Activated CD4-positive, alpha-beta memory T cell treated with anti-CD3 and anti-CD28 coated beads for 36 hours (primary cell): ENCODE measurements at regions of chr4 and their contacts with region 1.

Region 1: DNA sequence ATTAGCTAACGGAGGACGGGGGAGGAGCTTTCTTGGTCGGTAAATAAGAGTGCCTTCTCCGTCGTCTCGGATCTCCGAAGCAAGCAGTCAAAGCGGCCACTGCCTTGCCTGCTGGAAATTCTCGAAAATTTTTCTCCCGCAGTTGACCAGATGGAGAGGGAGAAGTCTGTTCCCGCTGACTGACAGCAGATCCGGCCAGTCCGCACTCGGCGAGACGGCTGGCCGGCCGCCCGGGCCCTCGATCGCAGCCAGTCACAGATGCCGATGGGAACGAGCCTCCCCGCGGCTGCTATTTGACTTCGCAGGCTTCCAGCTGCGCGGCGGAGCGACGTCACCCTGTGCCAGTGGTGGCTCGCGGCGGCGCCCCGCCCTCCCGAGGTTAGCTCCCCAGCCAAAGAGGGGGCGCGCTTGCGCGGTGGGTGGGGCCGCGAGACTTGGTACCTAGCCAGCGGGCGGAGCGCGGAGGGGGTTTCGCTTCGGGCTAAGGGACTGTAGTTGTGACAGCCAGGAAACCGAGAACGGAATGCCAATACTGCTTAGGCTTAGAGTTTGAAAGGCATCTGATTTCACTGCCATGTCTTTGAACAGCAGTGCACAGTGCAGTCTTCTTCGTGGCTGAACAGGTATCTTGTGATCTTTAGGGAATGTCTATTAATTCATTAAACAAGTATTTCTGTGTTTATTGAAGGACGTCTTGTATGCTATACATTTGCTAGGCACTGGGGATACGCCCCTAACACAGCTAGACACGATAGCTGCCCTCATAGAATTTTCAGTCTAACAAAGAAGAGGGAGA is at the start of gene PPM1K:
- DNase-seq: peak; percentile 100
- H3K4me3 Mint-ChIP-seq: peak within 1 kb of the TSS; percentile 99
- H3K27ac Mint-ChIP-seq: peak within 1 kb of the TSS; percentile 99
- H3K4me1 Mint-ChIP-seq: peaks cover 36% of the 10 kb centered on the region
- H3K27me3 Mint-ChIP-seq: no peaks in the 10 kb centered on the region
- total RNA-seq, gene PPM1K: 63.7 to 65.5 TPM

Region 2: GRCh38 chr4:88007304-88008121 is 277.1 kb before region 1 on chr4 and contains the start of gene PKD2:
- CTCF ChIA-PET with region 1: no interaction called
- POLR2A ChIA-PET with region 1: no interaction called
- intact Hi-C with region 1: loop called (anchors 5 kb)
- DNase-seq: peak; percentile 84
- H3K4me3 Mint-ChIP-seq: peak within 1 kb of the TSS; percentile 88
- H3K27ac Mint-ChIP-seq: no peak within 1 kb of the TSS
- H3K4me1 Mint-ChIP-seq: peaks cover 19% of the 10 kb centered on the region
- H3K27me3 Mint-ChIP-seq: peaks cover 11% of the 10 kb centered on the region
- total RNA-seq, gene PKD2: 4.0 to 4.2 TPM

Region 3: GRCh38 chr4:88217920-88218319 is 66.7 kb before region 1 on chr4:
- CTCF ChIA-PET with region 1: interaction called, 7 read pairs
- POLR2A ChIA-PET with region 1: no interaction called
- intact Hi-C with region 1: loop called (anchors 2 kb)
- DNase-seq: no peak
- H3K4me3 Mint-ChIP-seq: no peak overlapping the region
- H3K27ac Mint-ChIP-seq: no peak overlapping the region
- H3K4me1 Mint-ChIP-seq: peaks cover 2% of the 10 kb centered on the region
- H3K27me3 Mint-ChIP-seq: peaks cover 3% of the 10 kb centered on the region

Region 4: GRCh38 chr4:88320780-88321373 is 36.2 kb after region 1 on chr4:
- CTCF ChIA-PET with region 1: no interaction called
- POLR2A ChIA-PET with region 1: interaction called, 18 read pairs
- intact Hi-C with region 1: loop called (anchors 1 kb)
- DNase-seq: peak; percentile 41
- H3K4me3 Mint-ChIP-seq: peak overlapping the region; percentile 60
- H3K27ac Mint-ChIP-seq: peak overlapping the region; percentile 77
- H3K4me1 Mint-ChIP-seq: peaks cover 20% of the 10 kb centered on the region
- H3K27me3 Mint-ChIP-seq: no peaks in the 10 kb centered on the region

Region 5: DNA sequence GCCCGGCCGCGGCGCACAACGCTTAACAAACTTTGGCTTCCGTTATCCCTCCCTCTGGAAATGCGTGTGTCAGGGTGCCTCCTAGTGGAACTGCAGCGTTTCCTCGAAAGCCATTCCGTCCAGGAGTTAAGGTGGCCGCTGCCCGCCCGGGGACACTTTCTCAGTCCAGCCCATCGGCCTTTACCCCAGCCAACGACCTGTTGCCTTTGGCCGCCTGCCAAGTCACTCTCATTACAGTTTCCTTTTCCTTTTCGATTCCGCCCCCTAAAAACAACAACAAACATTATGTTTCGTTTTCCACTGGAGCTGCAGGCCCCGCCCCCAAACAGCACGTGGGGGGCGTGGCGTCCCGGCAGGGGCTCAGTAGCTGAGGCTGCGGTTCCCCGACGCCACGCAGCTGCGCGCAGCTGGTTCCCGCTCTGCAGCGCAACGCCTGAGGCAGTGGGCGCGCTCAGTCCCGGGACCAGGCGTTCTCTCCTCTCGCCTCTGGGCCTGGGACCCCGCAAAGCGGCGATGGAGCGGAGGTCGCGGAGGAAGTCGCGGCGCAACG is 172.2 kb after region 1 on chr4 and contains the start of gene HERC5:
- CTCF ChIA-PET with region 1: interaction called, 8 read pairs
- POLR2A ChIA-PET with region 1: interaction called, 33 read pairs
- intact Hi-C with region 1: loop called (anchors 1 kb)
- DNase-seq: peak; percentile 94
- H3K4me3 Mint-ChIP-seq: peak within 1 kb of the TSS; percentile 100
- H3K27ac Mint-ChIP-seq: peak within 1 kb of the TSS; percentile 97
- H3K4me1 Mint-ChIP-seq: peaks cover 12% of the 10 kb centered on the region
- H3K27me3 Mint-ChIP-seq: peaks cover 3% of the 10 kb centered on the region
- total RNA-seq, gene HERC5: 32.3 to 34.0 TPM

Region 6: DNA sequence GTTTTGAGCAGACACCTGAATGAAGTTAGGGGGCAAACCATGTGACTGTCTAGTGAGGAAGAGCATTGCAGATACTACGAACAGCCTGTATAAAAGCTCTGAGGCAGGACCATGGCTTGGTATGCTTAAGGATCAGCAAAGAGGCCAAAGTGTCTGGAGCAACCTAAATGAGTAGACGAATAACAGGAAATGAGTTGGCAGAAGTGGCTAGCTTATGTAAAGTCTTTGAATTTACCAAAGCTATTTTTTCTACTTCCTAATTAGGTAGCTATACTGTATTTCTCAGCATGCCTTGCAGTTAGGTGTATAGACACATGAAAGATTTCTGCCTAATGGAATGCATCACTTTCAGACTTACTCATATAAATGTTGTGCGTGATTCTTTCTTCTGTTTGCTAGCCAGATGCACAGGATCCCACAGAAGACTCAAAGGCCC is 1032.3 kb after region 1 on chr4:
- CTCF ChIA-PET with region 1: no interaction called
- POLR2A ChIA-PET with region 1: no interaction called
- intact Hi-C with region 1: no loop called
- DNase-seq: peak; percentile 41
- H3K4me3 Mint-ChIP-seq: peak overlapping the region; percentile 33
- H3K27ac Mint-ChIP-seq: peak overlapping the region; percentile 84
- H3K4me1 Mint-ChIP-seq: peaks cover 47% of the 10 kb centered on the region
- H3K27me3 Mint-ChIP-seq: no peaks in the 10 kb centered on the region